ENCODE measurements at regions of chr4 and their contacts with region 1.

Region 1: DNA sequence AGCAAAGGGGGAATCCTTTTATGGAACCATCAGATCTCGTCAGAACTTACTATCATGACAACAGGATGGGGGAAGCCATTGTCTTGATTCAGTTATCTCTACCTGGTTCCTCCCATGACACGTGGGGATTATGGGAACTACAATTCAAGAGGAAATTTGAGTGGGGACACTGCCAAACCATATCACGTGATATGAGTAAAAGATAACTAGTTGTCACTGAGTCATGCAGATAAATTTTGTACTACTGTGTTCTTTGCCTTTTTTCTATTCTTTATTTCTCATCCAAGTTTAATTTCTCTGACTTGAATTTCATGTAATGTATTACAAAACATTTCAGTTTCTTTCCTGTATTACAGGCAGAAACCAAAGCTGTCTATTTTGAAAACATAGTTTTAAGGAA is 383.2 kb downstream of the EPHA5 start:
- DNase-seq: no peak
- H3K4me3 ChIP-seq: no peak overlapping the region
- CTCF ChIP-seq: no peak
- POLR2A ChIP-seq: no peak

Region 2: DNA sequence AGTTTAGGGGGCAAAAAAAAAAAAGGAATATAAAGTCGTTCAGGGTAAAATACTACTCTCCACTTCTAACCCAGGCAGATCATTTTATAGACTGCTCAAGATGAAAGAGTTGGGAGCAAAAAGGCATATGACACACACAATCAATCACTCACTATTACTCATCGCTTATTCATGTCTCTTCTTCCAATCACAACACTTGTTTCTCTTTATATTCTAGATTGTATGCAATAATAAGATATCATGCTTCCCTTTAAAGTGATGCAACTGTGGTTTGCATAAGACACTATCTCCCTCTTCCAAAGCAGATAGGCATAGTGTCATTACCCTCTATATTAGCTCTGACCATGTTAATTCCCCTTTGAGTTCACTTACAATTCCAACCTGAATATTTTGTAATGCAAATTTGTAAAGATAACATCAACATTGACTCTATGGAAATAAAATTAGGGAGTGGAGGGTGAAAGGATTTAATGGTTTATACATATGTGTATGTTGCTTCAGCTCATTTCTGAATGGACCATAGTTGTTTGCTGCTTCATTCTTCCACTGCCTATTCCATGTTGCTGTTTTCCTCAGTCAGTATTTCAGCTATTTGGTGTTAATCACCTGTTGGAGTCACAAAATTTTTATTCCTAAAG is 538.2 kb after region 1 on chr4:
- intact Hi-C with region 1: loop called (anchors 5 kb)
- DNase-seq: no peak
- H3K4me3 ChIP-seq: no peak overlapping the region
- CTCF ChIP-seq: no peak
- POLR2A ChIP-seq: no peak

Region 3: DNA sequence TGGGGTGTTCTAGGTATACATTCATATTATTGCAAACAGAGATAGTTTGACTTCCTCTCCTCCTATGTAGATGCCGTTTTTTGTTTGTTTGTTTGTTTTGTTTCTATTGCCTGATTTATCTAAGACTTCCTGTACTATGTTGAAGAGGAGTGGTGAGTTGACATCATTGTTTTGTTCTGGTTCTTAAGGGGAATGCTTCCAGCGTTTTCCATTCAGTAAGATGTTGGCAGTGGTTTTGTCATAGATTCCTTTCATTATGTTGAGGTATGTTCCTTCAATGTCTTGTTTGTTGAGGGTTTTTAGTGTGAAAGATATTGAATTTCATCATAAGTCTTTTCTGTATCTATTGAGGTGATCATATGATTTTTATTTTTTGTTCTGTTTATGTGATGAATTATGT is 784.8 kb after region 1 on chr4:
- intact Hi-C with region 1: no loop called
- DNase-seq: no peak
- H3K4me3 ChIP-seq: no peak overlapping the region
- CTCF ChIP-seq: no peak
- POLR2A ChIP-seq: no peak

Measured in lower leg skin (tissue), 4 donors.